Sigmoid colon (tissue), 7 donors: ENCODE measurements at regions of chr11 and their contacts with region 1.

Region 1: DNA sequence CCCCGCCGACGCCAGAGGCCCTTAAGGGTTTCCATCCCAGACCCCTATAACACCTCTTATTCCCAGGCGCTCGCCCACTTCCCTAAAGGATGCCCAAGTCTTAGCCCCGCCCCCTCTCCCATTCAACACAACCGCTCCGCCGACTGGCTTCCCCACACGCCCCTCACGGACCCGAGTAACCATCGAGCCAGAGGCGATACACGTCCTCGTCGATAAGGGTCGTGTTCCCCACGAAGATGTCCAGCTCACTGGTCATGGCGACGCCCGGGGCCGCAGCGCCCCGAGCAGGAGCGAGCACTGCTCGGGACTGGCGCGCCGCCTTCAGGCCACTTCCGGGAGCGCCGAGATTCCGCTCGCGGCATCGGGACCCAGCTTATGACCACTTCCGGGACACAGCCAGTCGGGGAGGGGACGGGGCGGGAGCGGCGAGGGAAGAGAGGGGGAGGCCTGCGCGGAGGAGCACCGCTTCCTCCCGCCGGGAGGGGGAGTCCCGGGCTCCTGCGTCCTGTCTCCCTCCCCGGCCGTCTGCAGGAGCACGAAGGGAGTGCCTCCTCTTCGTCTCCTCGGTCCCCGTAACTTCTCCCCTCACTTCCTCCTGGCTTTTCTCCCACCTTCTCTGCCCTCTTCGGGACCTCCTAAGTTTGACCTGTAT is at the start of gene FIBP:
- DNase-seq: peak; percentile 99
- H3K4me3 ChIP-seq: peak within 1 kb of the TSS; percentile 53 to 75 (median 62)
- H3K27ac ChIP-seq: peak within 1 kb of the TSS; percentile 95 to 98 (median 97)
- H3K4me1 ChIP-seq: peaks cover 0 to 71% (median 62%) of the 10 kb centered on the region in 4 donors
- H3K27me3 ChIP-seq: no peaks in the 10 kb centered on the region
- CTCF ChIP-seq: peak; percentile 85 to 99 (median 91)
- EP300 ChIP-seq: no peak
- POLR2A ChIP-seq: peak; percentile 90 to 92
- total RNA-seq, gene FIBP: 37.5 to 60.7 (median 48.6) TPM

Region 2: GRCh38 chr11:65791691-65792213 is 96.5 kb before region 1 on chr11:
- intact Hi-C with region 1: no loop called
- DNase-seq: no peak
- H3K4me3 ChIP-seq: no peak overlapping the region
- H3K27ac ChIP-seq: no peak overlapping the region
- H3K4me1 ChIP-seq: peaks cover 0 to 16% (median 15%) of the 10 kb centered on the region in 4 donors
- H3K27me3 ChIP-seq: peaks cover 17 to 38% (median 20%) of the 10 kb centered on the region in 3 donors
- CTCF ChIP-seq: no peak
- EP300 ChIP-seq: no peak
- POLR2A ChIP-seq: peak in 1 of 2 donors; percentile 14

Region 3: DNA sequence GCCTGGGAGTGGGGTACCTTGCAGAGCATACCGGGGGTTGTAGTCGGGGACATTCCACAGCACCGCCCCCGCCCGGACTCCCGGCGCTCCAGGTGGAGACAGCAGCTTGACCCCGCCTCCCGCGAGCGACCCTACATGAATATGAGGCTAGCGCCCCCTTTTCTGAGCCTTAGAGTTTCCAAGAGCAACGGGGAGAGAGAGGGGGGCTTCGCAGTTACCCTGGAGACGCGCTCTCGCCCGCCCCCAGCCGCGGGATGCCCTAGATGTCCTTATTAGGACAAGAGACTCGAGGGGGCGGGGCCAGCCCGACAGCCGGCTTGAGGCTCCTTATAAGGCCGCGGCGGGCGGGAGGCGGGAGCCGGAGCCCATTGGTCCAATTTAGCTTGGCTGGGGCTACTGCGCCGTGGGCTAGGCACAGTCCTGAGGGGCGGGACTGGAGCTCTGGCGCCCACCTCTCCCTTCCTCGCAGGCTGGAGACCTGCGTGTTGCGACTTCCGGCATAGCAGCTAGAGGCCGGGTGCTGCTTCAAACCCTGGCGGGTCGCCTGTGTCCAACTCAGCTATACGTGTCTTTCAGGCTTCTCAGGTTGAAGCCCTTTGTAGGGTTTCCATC is 29.0 kb before region 1 on chr11:
- intact Hi-C with region 1: loop called (anchors 1 kb)
- DNase-seq: peak; percentile 100
- H3K4me3 ChIP-seq: peak overlapping the region; percentile 79 to 98 (median 90)
- H3K27ac ChIP-seq: peak overlapping the region; percentile 89 to 99 (median 95)
- H3K4me1 ChIP-seq: peaks cover 0 to 61% (median 50%) of the 10 kb centered on the region in 4 donors
- H3K27me3 ChIP-seq: no peaks in the 10 kb centered on the region
- CTCF ChIP-seq: no peak
- EP300 ChIP-seq: peak in 1 of 4 donors; percentile 28
- POLR2A ChIP-seq: peak; percentile 98 to 99

Region 4: GRCh38 chr11:65919146-65920033 is 31.1 kb after region 1 on chr11 and contains the start of gene DRAP1:
- intact Hi-C with region 1: loop called (anchors 1 kb)
- DNase-seq: peak; percentile 99
- H3K4me3 ChIP-seq: peak within 1 kb of the TSS; percentile 90 to 99 (median 97)
- H3K27ac ChIP-seq: peak within 1 kb of the TSS; percentile 95 to 99 (median 98)
- H3K4me1 ChIP-seq: peaks cover 0 to 55% (median 53%) of the 10 kb centered on the region in 4 donors
- H3K27me3 ChIP-seq: no peaks in the 10 kb centered on the region
- CTCF ChIP-seq: no peak
- EP300 ChIP-seq: no peak
- POLR2A ChIP-seq: peak; percentile 14 to 32
- total RNA-seq, gene DRAP1: 58.9 to 115 (median 79.2) TPM

Region 5: GRCh38 chr11:65961232-65961901 is 73.1 kb after region 1 on chr11 and contains the start of gene SART1:
- intact Hi-C with region 1: loop called (anchors 2 kb)
- DNase-seq: peak; percentile 99
- H3K4me3 ChIP-seq: peak within 1 kb of the TSS; percentile 92 to 99 (median 96)
- H3K27ac ChIP-seq: peak within 1 kb of the TSS; percentile 90 to 94 (median 92)
- H3K4me1 ChIP-seq: peaks cover 0 to 31% (median 30%) of the 10 kb centered on the region in 4 donors
- H3K27me3 ChIP-seq: no peaks in the 10 kb centered on the region
- CTCF ChIP-seq: no peak
- EP300 ChIP-seq: peak in 1 of 4 donors; percentile 49
- POLR2A ChIP-seq: peak in 1 of 2 donors; percentile 58
- total RNA-seq, gene SART1: 33.8 to 38.8 (median 37.0) TPM

Region 6: GRCh38 chr11:65988791-65989592 is 100.7 kb after region 1 on chr11:
- intact Hi-C with region 1: loop called (anchors 1 kb)
- DNase-seq: peak; percentile 94
- H3K4me3 ChIP-seq: no peak overlapping the region
- H3K27ac ChIP-seq: peak overlapping the region in 3 of 4 donors; percentile 25 to 38 (median 31)
- H3K4me1 ChIP-seq: no peaks in the 10 kb centered on the region
- H3K27me3 ChIP-seq: no peaks in the 10 kb centered on the region
- CTCF ChIP-seq: peak; percentile 87 to 98 (median 94)
- EP300 ChIP-seq: no peak
- POLR2A ChIP-seq: no peak

Region 7: GRCh38 chr11:66001942-66002647 is 113.8 kb after region 1 on chr11 and contains the starts of genes BANF1 and EIF1AD:
- intact Hi-C with region 1: loop called (anchors 5 kb)
- DNase-seq: peak; percentile 97
- H3K4me3 ChIP-seq: peak within 1 kb of the TSS; percentile 66 to 85 (median 72)
- H3K27ac ChIP-seq: peak within 1 kb of the TSS; percentile 86 to 94 (median 92)
- H3K4me1 ChIP-seq: peaks cover 0 to 31% (median 26%) of the 10 kb centered on the region in 4 donors
- H3K27me3 ChIP-seq: no peaks in the 10 kb centered on the region
- CTCF ChIP-seq: no peak
- EP300 ChIP-seq: no peak
- POLR2A ChIP-seq: peak; percentile 17 to 56
- total RNA-seq, gene BANF1: 40.4 to 76.4 (median 50.5) TPM
- total RNA-seq, gene EIF1AD: 19.4 to 23.9 (median 21.1) TPM

Region 8: GRCh38 chr11:66112601-66113098 is 224.4 kb after region 1 on chr11:
- intact Hi-C with region 1: no loop called
- DNase-seq: no peak
- H3K4me3 ChIP-seq: no peak overlapping the region
- H3K27ac ChIP-seq: peak overlapping the region in 1 of 4 donors; percentile 39
- H3K4me1 ChIP-seq: peaks cover 0 to 26% (median 22%) of the 10 kb centered on the region in 4 donors
- H3K27me3 ChIP-seq: no peaks in the 10 kb centered on the region
- CTCF ChIP-seq: no peak
- EP300 ChIP-seq: no peak
- POLR2A ChIP-seq: no peak

Region 9: DNA sequence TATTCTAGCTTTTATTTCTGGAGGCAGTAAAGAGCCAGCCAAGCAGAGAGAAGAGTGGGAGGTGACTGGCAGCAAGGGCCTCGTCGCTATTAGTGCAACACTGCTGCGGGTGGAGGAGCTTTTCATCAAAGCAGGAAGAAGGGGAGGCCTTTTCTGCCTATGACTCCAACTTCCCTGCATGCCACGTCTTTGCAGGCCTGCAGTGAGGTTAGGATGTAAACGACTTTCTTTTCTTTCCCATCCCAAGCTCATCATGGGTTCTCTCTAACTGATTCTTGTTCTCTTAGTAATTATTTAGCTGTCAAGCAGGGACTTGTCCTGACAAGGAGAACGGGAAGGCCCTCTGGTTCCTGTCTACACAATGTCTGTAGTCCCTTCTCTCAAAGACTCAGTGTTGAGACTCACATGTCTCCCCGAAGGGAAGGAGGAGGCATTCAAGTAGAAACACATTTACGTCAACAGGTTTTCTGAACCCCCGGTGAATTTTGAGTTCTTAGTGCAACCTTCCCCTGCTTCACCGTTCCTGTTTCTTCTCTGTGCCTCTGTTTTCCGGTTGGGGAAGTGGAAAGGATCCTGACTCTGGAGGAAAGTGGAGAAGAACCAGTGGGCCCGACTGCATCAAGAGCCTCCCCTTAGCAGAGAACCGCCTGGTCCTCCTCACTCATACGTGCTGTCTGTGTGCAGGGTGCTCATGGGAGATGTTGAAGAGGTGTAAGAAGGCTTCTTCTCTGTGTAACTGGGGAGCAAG is 238.7 kb after region 1 on chr11:
- intact Hi-C with region 1: no loop called
- DNase-seq: peak; percentile 72
- H3K4me3 ChIP-seq: no peak overlapping the region
- H3K27ac ChIP-seq: peak overlapping the region in 3 of 4 donors; percentile 50 to 63 (median 54)
- H3K4me1 ChIP-seq: peaks cover 0 to 27% (median 11%) of the 10 kb centered on the region in 4 donors
- H3K27me3 ChIP-seq: no peaks in the 10 kb centered on the region
- CTCF ChIP-seq: no peak
- EP300 ChIP-seq: no peak
- POLR2A ChIP-seq: no peak